ENCODE measurements at regions of chr11 and their contacts with region 1.

Region 1: GRCh38 chr11:72179804-72180396 is 12.0 kb upstream of the FOLR1 start:
- DNase-seq: no peak
- H3K4me3 ChIP-seq: no peak overlapping the region
- H3K27ac ChIP-seq: no peak overlapping the region
- H3K4me1 ChIP-seq: no peaks in the 10 kb centered on the region
- H3K27me3 ChIP-seq: no peaks in the 10 kb centered on the region
- CTCF ChIP-seq: no peak
- EP300 ChIP-seq: no peak
- POLR2A ChIP-seq: no peak
- RAD21 ChIP-seq: no peak

Region 2: GRCh38 chr11:72024069-72024754 is 155.7 kb before region 1 on chr11:
- CTCF ChIA-PET with region 1: interaction called, 20 read pairs
- POLR2A ChIA-PET with region 1: no interaction called
- DNase-seq: no peak
- H3K4me3 ChIP-seq: no peak overlapping the region
- H3K27ac ChIP-seq: peak overlapping the region; percentile 26; the same call in 1 of the 2 replicates
- H3K4me1 ChIP-seq: no peaks in the 10 kb centered on the region
- H3K27me3 ChIP-seq: no peaks in the 10 kb centered on the region
- CTCF ChIP-seq: no peak
- EP300 ChIP-seq: no peak
- POLR2A ChIP-seq: no peak
- RAD21 ChIP-seq: no peak

Region 3: DNA sequence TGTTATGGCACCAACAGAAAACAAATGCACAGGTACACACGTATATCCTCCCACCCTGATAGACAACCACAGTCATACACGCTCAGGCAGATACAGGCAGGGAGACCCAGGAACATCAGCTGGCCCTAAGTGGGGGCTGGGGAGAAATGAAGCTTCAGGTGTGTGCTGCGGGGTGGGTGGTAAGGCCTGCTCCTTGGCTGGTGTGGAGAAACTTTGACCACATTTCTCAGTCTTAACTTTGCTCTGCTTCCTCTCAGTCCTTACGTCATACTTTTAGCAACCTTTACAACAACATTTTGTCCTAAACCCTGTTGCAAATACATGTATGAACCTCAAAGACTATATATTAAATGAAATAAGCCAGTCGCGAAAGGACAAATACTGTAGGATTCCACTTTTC is 60.7 kb before region 1 on chr11:
- CTCF ChIA-PET with region 1: interaction called, 10 read pairs
- POLR2A ChIA-PET with region 1: no interaction called
- DNase-seq: no peak
- H3K4me3 ChIP-seq: no peak overlapping the region
- H3K27ac ChIP-seq: no peak overlapping the region
- H3K4me1 ChIP-seq: no peaks in the 10 kb centered on the region
- H3K27me3 ChIP-seq: peaks cover 0 to 9% (median 3%) of the 10 kb centered on the region in 4 experiments; a peak in 5 of 7 replicates
- CTCF ChIP-seq: no peak
- EP300 ChIP-seq: no peak
- POLR2A ChIP-seq: no peak
- RAD21 ChIP-seq: no peak

Region 4: DNA sequence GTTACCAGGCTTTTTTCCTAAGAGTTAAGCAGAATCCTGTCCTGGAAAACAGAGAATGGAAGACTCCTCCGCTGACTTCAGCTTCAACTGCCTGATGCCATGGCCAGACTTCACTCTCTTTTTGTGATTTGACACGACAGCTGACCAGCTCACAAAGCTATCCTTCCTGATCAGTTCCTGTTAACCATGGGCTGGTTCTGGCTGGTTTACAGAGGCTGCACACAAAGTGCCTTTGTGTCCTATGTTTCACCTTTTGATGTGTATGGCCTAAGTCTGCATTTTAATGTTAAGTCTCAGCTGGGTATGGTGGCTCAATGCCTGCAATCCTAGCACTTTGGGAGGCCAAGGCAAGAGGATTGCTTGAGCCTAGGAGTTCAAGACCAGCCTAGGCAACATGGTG is 33.3 kb before region 1 on chr11:
- CTCF ChIA-PET with region 1: interaction called, 19 read pairs
- POLR2A ChIA-PET with region 1: no interaction called
- DNase-seq: no peak
- H3K4me3 ChIP-seq: no peak overlapping the region
- H3K27ac ChIP-seq: no peak overlapping the region
- H3K4me1 ChIP-seq: no peaks in the 10 kb centered on the region
- H3K27me3 ChIP-seq: no peaks in the 10 kb centered on the region
- CTCF ChIP-seq: no peak
- EP300 ChIP-seq: no peak
- POLR2A ChIP-seq: no peak
- RAD21 ChIP-seq: no peak

Region 5: GRCh38 chr11:72160319-72160718 is 19.6 kb before region 1 on chr11:
- CTCF ChIA-PET with region 1: interaction called, 17 read pairs
- POLR2A ChIA-PET with region 1: no interaction called
- DNase-seq: no peak
- H3K4me3 ChIP-seq: no peak overlapping the region
- H3K27ac ChIP-seq: no peak overlapping the region
- H3K4me1 ChIP-seq: no peaks in the 10 kb centered on the region
- H3K27me3 ChIP-seq: no peaks in the 10 kb centered on the region
- CTCF ChIP-seq: no peak
- EP300 ChIP-seq: no peak
- POLR2A ChIP-seq: no peak
- RAD21 ChIP-seq: no peak

Region 6: GRCh38 chr11:72238040-72238450 is 58.1 kb after region 1 on chr11:
- CTCF ChIA-PET with region 1: interaction called, 20 read pairs
- POLR2A ChIA-PET with region 1: interaction called, 3 read pairs
- DNase-seq: peak; percentile 85 to 92
- H3K4me3 ChIP-seq: peak overlapping the region in 3 of 4 experiments; percentile 9 to 60 (median 34); a peak in 4 of 8 replicates
- H3K27ac ChIP-seq: 0 out of 2 replicates have a peak overlapping the region, but pooled peaks have one; percentile 6
- H3K4me1 ChIP-seq: peaks cover 3 to 29% (median 23%) of the 10 kb centered on the region in 4 experiments
- H3K27me3 ChIP-seq: peaks cover 36 to 47% (median 44%) of the 10 kb centered on the region in 4 experiments
- CTCF ChIP-seq: peak; percentile 88 to 95 (median 92)
- EP300 ChIP-seq: peak in 1 of 2 experiments; percentile 56; a peak in 1 of 3 replicates
- POLR2A ChIP-seq: no peak
- RAD21 ChIP-seq: peak; percentile 74 to 81

Region 7: GRCh38 chr11:72378704-72379384 is 198.9 kb after region 1 on chr11:
- CTCF ChIA-PET with region 1: no interaction called
- POLR2A ChIA-PET with region 1: no interaction called
- DNase-seq: no peak
- H3K4me3 ChIP-seq: no peak overlapping the region
- H3K27ac ChIP-seq: no peak overlapping the region
- H3K4me1 ChIP-seq: 0 out of 7 replicates have a peak, but pooled peaks cover 0 to 4% (median 0%) of the 10 kb centered on the region in 4 experiments
- H3K27me3 ChIP-seq: no peaks in the 10 kb centered on the region
- CTCF ChIP-seq: no peak
- EP300 ChIP-seq: no peak
- POLR2A ChIP-seq: no peak
- RAD21 ChIP-seq: no peak

Measured in H1 (cell line).